ENCODE measurements at regions of chr21 and their contacts with region 1.

Region 1: DNA sequence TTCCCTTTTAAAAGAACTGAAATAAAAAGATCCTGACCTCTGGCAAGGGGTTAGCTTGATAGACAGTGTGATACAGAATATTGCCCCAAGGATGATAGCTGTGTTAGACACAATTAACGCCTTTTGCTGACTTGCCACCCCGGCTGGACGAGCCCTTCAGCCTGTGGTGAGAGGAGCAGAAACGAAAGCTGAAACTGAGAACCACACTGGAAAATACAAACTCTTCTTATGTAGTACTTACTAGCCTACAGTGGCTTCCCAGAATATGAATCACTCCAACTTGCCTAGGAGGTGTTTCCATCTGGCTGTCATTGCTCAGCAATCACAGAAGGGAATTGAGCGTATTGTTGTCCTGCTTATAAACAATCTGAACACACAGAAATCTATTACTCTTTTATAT is 22.9 kb downstream of the SAMSN1 start:
- DNase-seq: no peak
- ATAC-seq: peak; percentile 60
- H3K4me3 Mint-ChIP-seq: peak overlapping the region; percentile 78
- H3K27ac Mint-ChIP-seq: peak overlapping the region; percentile 82
- H3K4me1 Mint-ChIP-seq: peaks cover 63% of the 10 kb centered on the region
- H3K27me3 Mint-ChIP-seq: no peaks in the 10 kb centered on the region
- CTCF ChIP-seq: no peak

Region 2: GRCh38 chr21:14403681-14404318 is 119.4 kb before region 1 on chr21:
- CTCF ChIA-PET with region 1: no interaction called
- POLR2A ChIA-PET with region 1: no interaction called
- intact Hi-C with region 1: no loop called
- DNase-seq: no peak
- ATAC-seq: peak; percentile 57
- H3K4me3 Mint-ChIP-seq: no peak overlapping the region
- H3K27ac Mint-ChIP-seq: no peak overlapping the region
- H3K4me1 Mint-ChIP-seq: no peaks in the 10 kb centered on the region
- H3K27me3 Mint-ChIP-seq: no peaks in the 10 kb centered on the region
- CTCF ChIP-seq: peak; percentile 77

Region 3: GRCh38 chr21:14492931-14493330 is 30.3 kb before region 1 on chr21:
- CTCF ChIA-PET with region 1: no interaction called
- POLR2A ChIA-PET with region 1: no interaction called
- intact Hi-C with region 1: no loop called
- DNase-seq: no peak
- ATAC-seq: no peak
- H3K4me3 Mint-ChIP-seq: no peak overlapping the region
- H3K27ac Mint-ChIP-seq: no peak overlapping the region
- H3K4me1 Mint-ChIP-seq: peaks cover under 1% of the 10 kb centered on the region
- H3K27me3 Mint-ChIP-seq: no peaks in the 10 kb centered on the region
- CTCF ChIP-seq: no peak

Region 4: GRCh38 chr21:14554948-14555347 is 31.7 kb after region 1 on chr21:
- CTCF ChIA-PET with region 1: no interaction called
- POLR2A ChIA-PET with region 1: interaction called, 4 read pairs
- intact Hi-C with region 1: loop called (anchors 5 kb)
- DNase-seq: no peak
- ATAC-seq: no peak
- H3K4me3 Mint-ChIP-seq: no peak overlapping the region
- H3K27ac Mint-ChIP-seq: peak overlapping the region; percentile 59
- H3K4me1 Mint-ChIP-seq: peaks cover 65% of the 10 kb centered on the region
- H3K27me3 Mint-ChIP-seq: no peaks in the 10 kb centered on the region
- CTCF ChIP-seq: no peak

Region 5: GRCh38 chr21:14916676-14917141 is 393.5 kb after region 1 on chr21:
- CTCF ChIA-PET with region 1: no interaction called
- POLR2A ChIA-PET with region 1: no interaction called
- intact Hi-C with region 1: no loop called
- DNase-seq: no peak
- ATAC-seq: no peak
- H3K4me3 Mint-ChIP-seq: no peak overlapping the region
- H3K27ac Mint-ChIP-seq: no peak overlapping the region
- H3K4me1 Mint-ChIP-seq: peaks cover 1% of the 10 kb centered on the region
- H3K27me3 Mint-ChIP-seq: no peaks in the 10 kb centered on the region
- CTCF ChIP-seq: no peak

Measured in activated B cell treated with CpG ODN at 0.5 μM for 24 hours (primary cell).